ENCODE measurements at regions of chr1 and their contacts with region 1.

Region 1: GRCh38 chr1:55277377-55278130 is 62.4 kb upstream of the USP24 start:
- DNase-seq: peak; percentile 79
- ATAC-seq: peak; percentile 97
- H3K4me3 ChIP-seq: no peak overlapping the region
- H3K27ac ChIP-seq: no peak overlapping the region
- H3K4me1 ChIP-seq: peaks cover 4 to 12% of the 10 kb centered on the region in 2 experiments; a peak in 3 of 4 replicates
- H3K27me3 ChIP-seq: no peaks in the 10 kb centered on the region
- CTCF ChIP-seq: peak; percentile 75 to 82 (median 81)
- POLR2A ChIP-seq: no peak
- RAD21 ChIP-seq: peak; percentile 81

Region 2: DNA sequence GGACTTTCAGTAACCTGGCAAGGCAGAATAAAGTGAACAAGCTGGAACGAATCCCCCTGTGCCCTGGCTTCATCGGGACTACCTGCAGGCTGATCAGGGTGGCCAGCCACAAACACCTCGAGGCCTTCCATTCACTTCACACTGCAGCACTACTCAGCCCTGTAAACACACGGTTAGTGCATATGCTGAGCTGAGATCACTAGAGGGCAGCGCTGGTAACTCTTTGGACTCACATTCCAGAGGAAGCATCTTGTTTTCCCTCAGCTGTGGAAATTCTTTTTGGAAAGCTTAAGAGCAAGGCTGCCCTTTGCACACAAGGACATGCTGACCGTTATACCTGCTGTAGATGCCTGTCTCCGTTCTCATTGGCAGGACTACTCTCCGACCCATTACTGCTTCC is 206.1 kb before region 1 on chr1:
- CTCF ChIA-PET with region 1: interaction called, 13 read pairs
- POLR2A ChIA-PET with region 1: no interaction called
- RAD21 ChIA-PET with region 1: no interaction called
- intact Hi-C with region 1: loop called (anchors 2 kb)
- DNase-seq: no peak
- ATAC-seq: peak; percentile 93
- H3K4me3 ChIP-seq: no peak overlapping the region
- H3K27ac ChIP-seq: no peak overlapping the region
- H3K4me1 ChIP-seq: no peaks in the 10 kb centered on the region
- H3K27me3 ChIP-seq: no peaks in the 10 kb centered on the region
- CTCF ChIP-seq: peak; percentile 43 to 59 (median 56); a peak in 5 of 6 replicates
- POLR2A ChIP-seq: no peak
- RAD21 ChIP-seq: peak; percentile 59

Region 3: GRCh38 chr1:55304229-55304740 is 26.7 kb after region 1 on chr1:
- CTCF ChIA-PET with region 1: no interaction called
- POLR2A ChIA-PET with region 1: no interaction called
- RAD21 ChIA-PET with region 1: no interaction called
- intact Hi-C with region 1: no loop called
- DNase-seq: no peak
- ATAC-seq: no peak
- H3K4me3 ChIP-seq: no peak overlapping the region
- H3K27ac ChIP-seq: no peak overlapping the region
- H3K4me1 ChIP-seq: 0 out of 4 replicates have a peak, but pooled peaks cover 0 to 2% of the 10 kb centered on the region in 2 experiments
- H3K27me3 ChIP-seq: no peaks in the 10 kb centered on the region
- CTCF ChIP-seq: no peak
- POLR2A ChIP-seq: no peak
- RAD21 ChIP-seq: no peak

Region 4: DNA sequence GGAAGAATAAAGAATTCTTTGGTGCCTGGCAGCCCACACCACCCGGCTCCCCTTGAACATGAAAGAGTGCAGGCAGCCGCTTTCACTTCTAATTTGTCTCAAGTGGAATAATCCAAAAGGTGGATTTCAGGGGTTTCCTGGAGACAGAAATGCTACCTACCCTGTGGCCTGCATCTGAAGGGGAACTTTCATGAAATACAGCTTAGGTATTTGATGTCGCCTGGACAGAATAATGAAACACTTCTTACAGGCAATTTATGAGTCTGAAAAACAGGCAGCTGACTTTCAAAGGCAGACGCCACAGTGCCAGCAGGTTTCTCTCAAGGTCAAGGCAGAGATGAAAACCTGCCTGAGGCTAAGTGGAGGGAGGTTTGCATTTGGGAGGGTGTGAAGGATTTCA is 107.1 kb after region 1 on chr1:
- CTCF ChIA-PET with region 1: no interaction called
- POLR2A ChIA-PET with region 1: no interaction called
- RAD21 ChIA-PET with region 1: no interaction called
- intact Hi-C with region 1: no loop called
- DNase-seq: no peak
- ATAC-seq: no peak
- H3K4me3 ChIP-seq: no peak overlapping the region
- H3K27ac ChIP-seq: no peak overlapping the region
- H3K4me1 ChIP-seq: no peaks in the 10 kb centered on the region
- H3K27me3 ChIP-seq: no peaks in the 10 kb centered on the region
- CTCF ChIP-seq: no peak
- POLR2A ChIP-seq: no peak
- RAD21 ChIP-seq: no peak

Measured in HCT116 (cell line).